Activated CD8-positive, alpha-beta T cell treated with anti-CD3 and anti-CD28 coated beads, Interleukin-2, amount 10 ng/mL, durations not matched to agents 7 days and 5 days (primary cell): ENCODE measurements at regions of chr2 and their contacts with region 1.

Region 1: GRCh38 chr2:209577376-209578357 is 153.8 kb downstream of the MAP2 start:
- DNase-seq: no peak
- ATAC-seq: no peak
- H3K4me3 Mint-ChIP-seq: no peak overlapping the region
- H3K27ac Mint-ChIP-seq: no peak overlapping the region
- H3K4me1 Mint-ChIP-seq: peaks cover 5% of the 10 kb centered on the region
- H3K27me3 Mint-ChIP-seq: no peaks in the 10 kb centered on the region

Region 2: DNA sequence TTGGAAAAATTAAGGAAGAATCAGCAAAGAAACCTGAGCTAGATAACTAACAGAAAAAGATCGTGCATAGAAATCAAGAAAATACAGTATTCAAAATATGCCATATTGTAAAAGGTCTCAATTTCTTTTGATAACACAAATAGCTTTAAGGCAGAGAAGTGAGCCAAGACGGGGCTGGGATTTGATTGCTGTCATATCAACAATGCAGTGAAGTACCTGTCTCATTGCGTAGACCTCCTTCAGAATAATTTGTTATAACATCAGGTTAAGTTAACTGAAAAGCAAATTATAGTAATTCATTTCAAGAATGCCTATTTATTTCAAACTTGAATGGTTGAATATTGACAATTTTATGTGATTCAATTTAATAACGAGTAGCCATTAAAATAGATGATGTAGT is 607.6 kb before region 1 on chr2:
- CTCF ChIA-PET with region 1: no interaction called
- POLR2A ChIA-PET with region 1: no interaction called
- DNase-seq: no peak
- ATAC-seq: no peak
- H3K4me3 Mint-ChIP-seq: no peak overlapping the region
- H3K27ac Mint-ChIP-seq: no peak overlapping the region
- H3K4me1 Mint-ChIP-seq: no peaks in the 10 kb centered on the region
- H3K27me3 Mint-ChIP-seq: no peaks in the 10 kb centered on the region

Region 3: GRCh38 chr2:209334198-209335017 is 243.3 kb before region 1 on chr2:
- CTCF ChIA-PET with region 1: interaction called, 22 read pairs
- POLR2A ChIA-PET with region 1: no interaction called
- DNase-seq: peak; percentile 57
- ATAC-seq: peak; percentile 44
- H3K4me3 Mint-ChIP-seq: no peak overlapping the region
- H3K27ac Mint-ChIP-seq: no peak overlapping the region
- H3K4me1 Mint-ChIP-seq: no peaks in the 10 kb centered on the region
- H3K27me3 Mint-ChIP-seq: no peaks in the 10 kb centered on the region